CD8-positive, alpha-beta T cell (primary cell): ENCODE measurements at regions of chr2 and their contacts with region 1.

Region 1: DNA sequence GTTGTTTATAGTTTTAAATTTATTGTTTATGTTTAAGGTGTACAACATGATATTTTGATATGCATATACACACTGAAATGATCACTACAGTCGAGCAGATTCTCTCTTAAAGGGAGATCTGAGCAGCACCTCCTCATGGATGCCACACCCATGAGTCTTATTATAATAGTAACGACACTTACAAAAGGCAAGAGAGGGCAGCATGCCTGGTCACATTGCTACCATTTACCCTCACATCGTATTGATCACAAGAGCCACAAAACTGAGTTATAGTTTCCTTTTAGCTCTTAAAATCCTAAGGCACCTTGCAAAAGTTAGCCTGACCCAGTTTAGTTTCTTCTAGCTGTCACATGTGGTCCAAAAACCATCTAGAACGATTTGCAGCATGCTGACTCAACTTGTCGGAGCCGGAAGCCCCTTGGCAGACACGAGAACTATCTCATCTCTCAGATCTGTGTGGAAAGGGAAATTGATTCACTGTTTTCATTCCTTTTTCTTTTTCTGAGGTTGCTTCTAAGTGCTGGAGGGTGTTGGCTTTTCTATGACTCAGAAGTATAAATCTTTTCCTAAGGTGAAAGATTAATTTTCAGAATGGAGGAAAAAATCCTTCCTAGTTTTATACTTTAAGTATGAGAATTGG is 85.3 kb downstream of the CDC42EP3 start:
- DNase-seq: peak; percentile 37 to 91 (median 75)
- ATAC-seq: peak; percentile 85
- H3K4me3 ChIP-seq: no peak overlapping the region
- H3K4me3 Mint-ChIP-seq: peak overlapping the region; percentile 42
- H3K27ac ChIP-seq: peak overlapping the region; percentile 2 to 83
- H3K27ac Mint-ChIP-seq: peak overlapping the region; percentile 88
- H3K4me1 ChIP-seq: peaks cover 61% of the 10 kb centered on the region
- H3K4me1 Mint-ChIP-seq: peaks cover 87% of the 10 kb centered on the region
- H3K27me3 ChIP-seq: no peaks in the 10 kb centered on the region
- H3K27me3 Mint-ChIP-seq: no peaks in the 10 kb centered on the region
- CTCF ChIP-seq: no peak

Region 2: DNA sequence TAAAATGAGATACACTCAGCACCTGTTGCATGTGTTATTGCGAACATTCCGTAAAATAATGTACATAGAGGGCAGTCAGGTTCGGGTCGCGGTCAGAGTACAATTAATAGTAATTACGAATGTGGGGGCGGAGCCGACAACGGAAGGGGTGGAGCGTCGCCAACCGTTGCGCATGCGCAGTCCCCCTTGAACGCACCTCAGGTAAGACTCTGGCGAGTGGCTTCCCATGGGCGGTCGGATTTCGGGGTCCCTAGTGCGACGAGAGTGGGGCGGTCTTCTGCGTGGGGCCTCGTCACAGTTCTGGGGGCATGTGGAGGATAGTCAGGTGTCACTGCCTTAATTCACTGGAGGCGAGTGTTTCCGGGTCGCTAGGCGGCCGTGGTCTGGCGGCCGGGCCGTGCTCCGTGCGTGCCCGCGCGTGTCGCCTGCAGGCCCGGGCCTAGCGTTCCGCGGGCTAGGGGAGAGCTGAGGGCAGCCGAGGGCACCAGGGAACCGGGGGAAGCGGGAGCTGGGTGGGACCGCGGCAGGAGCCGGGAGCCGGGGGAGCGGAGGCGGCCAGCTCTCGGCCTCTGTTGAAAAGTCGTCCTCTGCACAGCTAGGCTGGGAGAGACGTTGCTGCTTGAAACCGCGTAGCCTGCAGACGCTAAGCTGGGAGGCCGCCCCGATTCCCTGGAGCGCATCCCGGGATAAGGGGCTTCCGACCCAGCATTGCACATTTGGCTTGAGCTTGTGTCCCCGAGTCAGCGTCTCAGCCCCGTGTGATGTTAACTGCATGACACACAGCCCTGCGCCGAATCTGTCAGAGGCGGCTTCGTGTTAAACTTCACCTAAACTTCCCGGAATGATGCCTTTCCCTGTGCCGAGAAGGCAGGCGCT is 389.5 kb before region 1 on chr2 and contains the start of gene CEBPZOS:
- CTCF ChIA-PET with region 1: no interaction called
- POLR2A ChIA-PET with region 1: no interaction called
- intact Hi-C with region 1: no loop called
- DNase-seq: peak; percentile 81 to 96 (median 91)
- ATAC-seq: peak; percentile 89
- H3K4me3 ChIP-seq: peak within 1 kb of the TSS; percentile 74 to 78
- H3K4me3 Mint-ChIP-seq: peak within 1 kb of the TSS; percentile 96
- H3K27ac ChIP-seq: peak within 1 kb of the TSS; percentile 74 to 78
- H3K27ac Mint-ChIP-seq: peak within 1 kb of the TSS; percentile 96
- H3K4me1 ChIP-seq: peaks cover 24% of the 10 kb centered on the region
- H3K4me1 Mint-ChIP-seq: peaks cover 35% of the 10 kb centered on the region
- H3K27me3 ChIP-seq: no peaks in the 10 kb centered on the region
- H3K27me3 Mint-ChIP-seq: no peaks in the 10 kb centered on the region
- CTCF ChIP-seq: no peak
- total RNA-seq, gene CEBPZOS: 17.5 to 18.2 TPM

Region 3: GRCh38 chr2:37543999-37544557 is 42.0 kb before region 1 on chr2:
- CTCF ChIA-PET with region 1: no interaction called
- POLR2A ChIA-PET with region 1: interaction called, 3 read pairs
- intact Hi-C with region 1: loop called in 1 of 2 experiments (anchors 2 kb)
- DNase-seq: no peak
- ATAC-seq: no peak
- H3K4me3 ChIP-seq: no peak overlapping the region
- H3K4me3 Mint-ChIP-seq: no peak overlapping the region
- H3K27ac ChIP-seq: no peak overlapping the region
- H3K27ac Mint-ChIP-seq: no peak overlapping the region
- H3K4me1 ChIP-seq: no peaks in the 10 kb centered on the region
- H3K4me1 Mint-ChIP-seq: peaks cover 4% of the 10 kb centered on the region
- H3K27me3 ChIP-seq: no peaks in the 10 kb centered on the region
- H3K27me3 Mint-ChIP-seq: no peaks in the 10 kb centered on the region
- CTCF ChIP-seq: no peak

Region 4: DNA sequence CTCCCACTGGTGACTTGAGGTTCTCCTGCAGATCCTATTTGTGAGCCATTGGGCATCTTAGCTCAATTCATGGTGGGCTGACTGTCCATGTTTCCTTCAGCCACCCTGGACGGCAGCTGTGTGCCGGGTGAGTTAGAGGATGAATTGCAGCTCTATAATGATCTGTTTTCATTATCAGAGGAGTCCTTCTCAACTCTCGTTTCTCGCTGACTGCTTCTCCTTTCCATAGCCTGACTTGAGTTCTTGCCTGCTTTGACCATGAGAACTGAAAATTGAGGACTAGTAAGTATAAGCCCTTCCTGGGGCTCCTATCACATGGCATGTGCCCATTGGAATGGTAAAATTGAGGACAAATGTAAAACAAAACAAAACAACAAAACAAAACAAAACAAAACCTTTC is 36.5 kb before region 1 on chr2:
- CTCF ChIA-PET with region 1: interaction called, 4 read pairs
- POLR2A ChIA-PET with region 1: interaction called, 3 read pairs
- intact Hi-C with region 1: loop called in 1 of 2 experiments (anchors 5 kb)
- DNase-seq: no peak
- ATAC-seq: no peak
- H3K4me3 ChIP-seq: no peak overlapping the region
- H3K4me3 Mint-ChIP-seq: no peak overlapping the region
- H3K27ac ChIP-seq: no peak overlapping the region
- H3K27ac Mint-ChIP-seq: no peak overlapping the region
- H3K4me1 ChIP-seq: no peaks in the 10 kb centered on the region
- H3K4me1 Mint-ChIP-seq: peaks cover 16% of the 10 kb centered on the region
- H3K27me3 ChIP-seq: no peaks in the 10 kb centered on the region
- H3K27me3 Mint-ChIP-seq: no peaks in the 10 kb centered on the region
- CTCF ChIP-seq: no peak

Region 5: DNA sequence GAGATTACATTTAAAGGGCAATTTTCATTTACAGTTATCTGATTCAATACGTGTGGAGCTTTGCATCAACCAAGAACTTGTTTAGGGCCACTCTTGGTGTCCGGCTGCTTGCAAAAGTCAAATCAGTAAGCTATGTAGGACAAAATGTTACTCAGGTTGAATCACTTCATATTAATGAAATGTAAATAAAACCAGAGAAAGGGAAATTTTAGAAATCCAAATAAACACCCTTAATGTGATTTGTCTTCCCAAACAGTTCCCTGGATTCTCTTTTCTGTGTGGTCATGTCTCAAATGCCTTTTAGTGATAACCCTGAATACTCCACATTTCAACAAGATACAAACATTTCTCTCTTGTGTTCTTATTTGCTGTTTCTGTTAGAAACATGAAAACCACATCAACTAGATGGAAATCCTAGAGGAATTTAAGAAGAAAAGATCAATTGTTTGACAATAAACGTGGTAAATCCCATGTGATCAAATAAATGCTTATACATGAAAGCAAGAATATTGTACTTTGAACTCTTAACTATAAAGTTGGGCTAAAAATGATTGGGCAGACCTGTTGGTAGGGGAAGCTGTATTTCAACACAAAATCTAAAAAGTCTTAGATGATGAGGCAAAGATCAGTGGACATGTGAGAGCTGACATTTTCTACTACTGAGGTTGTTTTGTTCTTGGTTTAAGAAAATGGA is 16.0 kb before region 1 on chr2:
- CTCF ChIA-PET with region 1: interaction called, 3 read pairs
- POLR2A ChIA-PET with region 1: interaction called, 7 read pairs
- intact Hi-C with region 1: loop called in 1 of 2 experiments (anchors 2 kb)
- DNase-seq: no peak
- ATAC-seq: no peak
- H3K4me3 ChIP-seq: no peak overlapping the region
- H3K4me3 Mint-ChIP-seq: no peak overlapping the region
- H3K27ac ChIP-seq: no peak overlapping the region
- H3K27ac Mint-ChIP-seq: no peak overlapping the region
- H3K4me1 ChIP-seq: peaks cover 8% of the 10 kb centered on the region
- H3K4me1 Mint-ChIP-seq: peaks cover 17% of the 10 kb centered on the region
- H3K27me3 ChIP-seq: no peaks in the 10 kb centered on the region
- H3K27me3 Mint-ChIP-seq: no peaks in the 10 kb centered on the region
- CTCF ChIP-seq: no peak

Region 6: DNA sequence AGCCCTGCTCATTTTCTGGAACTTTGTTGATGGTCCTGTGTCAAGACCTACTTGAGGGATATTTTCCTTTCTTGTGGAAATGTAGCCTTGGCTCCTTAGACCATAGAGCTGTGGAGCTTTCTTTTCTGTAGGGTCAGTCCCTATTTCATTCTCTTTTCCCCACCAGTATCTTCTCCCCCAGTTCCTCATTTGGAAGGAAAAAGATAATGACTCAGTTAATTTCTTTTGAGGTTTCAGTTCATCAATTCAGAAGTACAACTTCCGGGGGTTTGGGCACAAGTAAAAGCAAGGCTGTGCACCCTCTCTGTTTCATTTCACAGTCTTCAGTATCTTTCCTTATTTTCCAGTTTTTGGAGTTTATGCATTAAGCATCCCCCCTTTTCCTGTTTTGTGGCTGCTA is 14.6 kb after region 1 on chr2:
- CTCF ChIA-PET with region 1: interaction called, 6 read pairs
- POLR2A ChIA-PET with region 1: interaction called, 28 read pairs
- intact Hi-C with region 1: loop called (anchors 1 kb)
- DNase-seq: peak in 1 of 9 experiments; percentile 46
- ATAC-seq: no peak
- H3K4me3 ChIP-seq: peak overlapping the region; percentile 42 to 66
- H3K4me3 Mint-ChIP-seq: peak overlapping the region; percentile 90
- H3K27ac ChIP-seq: peak overlapping the region; percentile 65 to 84
- H3K27ac Mint-ChIP-seq: peak overlapping the region; percentile 99
- H3K4me1 ChIP-seq: peaks cover 44% of the 10 kb centered on the region
- H3K4me1 Mint-ChIP-seq: peaks cover 54% of the 10 kb centered on the region
- H3K27me3 ChIP-seq: no peaks in the 10 kb centered on the region
- H3K27me3 Mint-ChIP-seq: no peaks in the 10 kb centered on the region
- CTCF ChIP-seq: no peak

Region 7: GRCh38 chr2:37635504-37636380 is 49.6 kb after region 1 on chr2:
- CTCF ChIA-PET with region 1: no interaction called
- POLR2A ChIA-PET with region 1: no interaction called
- intact Hi-C with region 1: loop called (anchors 1 to 5 kb)
- DNase-seq: peak; percentile 29 to 94 (median 68)
- ATAC-seq: peak; percentile 82
- H3K4me3 ChIP-seq: peak overlapping the region in 1 of 2 experiments; percentile 21
- H3K4me3 Mint-ChIP-seq: peak overlapping the region; percentile 32
- H3K27ac ChIP-seq: peak overlapping the region; percentile 50 to 92
- H3K27ac Mint-ChIP-seq: peak overlapping the region; percentile 92
- H3K4me1 ChIP-seq: peaks cover 41% of the 10 kb centered on the region
- H3K4me1 Mint-ChIP-seq: peaks cover 80% of the 10 kb centered on the region
- H3K27me3 ChIP-seq: no peaks in the 10 kb centered on the region
- H3K27me3 Mint-ChIP-seq: no peaks in the 10 kb centered on the region
- CTCF ChIP-seq: no peak

Region 8: GRCh38 chr2:37795938-37796337 is 209.8 kb after region 1 on chr2:
- CTCF ChIA-PET with region 1: no interaction called
- POLR2A ChIA-PET with region 1: no interaction called
- intact Hi-C with region 1: no loop called
- DNase-seq: no peak
- ATAC-seq: no peak
- H3K4me3 ChIP-seq: no peak overlapping the region
- H3K4me3 Mint-ChIP-seq: no peak overlapping the region
- H3K27ac ChIP-seq: no peak overlapping the region
- H3K27ac Mint-ChIP-seq: no peak overlapping the region
- H3K4me1 ChIP-seq: no peaks in the 10 kb centered on the region
- H3K4me1 Mint-ChIP-seq: no peaks in the 10 kb centered on the region
- H3K27me3 ChIP-seq: no peaks in the 10 kb centered on the region
- H3K27me3 Mint-ChIP-seq: no peaks in the 10 kb centered on the region
- CTCF ChIP-seq: no peak